ENCODE measurements at regions of chr7 and their contacts with region 1.

Region 1: DNA sequence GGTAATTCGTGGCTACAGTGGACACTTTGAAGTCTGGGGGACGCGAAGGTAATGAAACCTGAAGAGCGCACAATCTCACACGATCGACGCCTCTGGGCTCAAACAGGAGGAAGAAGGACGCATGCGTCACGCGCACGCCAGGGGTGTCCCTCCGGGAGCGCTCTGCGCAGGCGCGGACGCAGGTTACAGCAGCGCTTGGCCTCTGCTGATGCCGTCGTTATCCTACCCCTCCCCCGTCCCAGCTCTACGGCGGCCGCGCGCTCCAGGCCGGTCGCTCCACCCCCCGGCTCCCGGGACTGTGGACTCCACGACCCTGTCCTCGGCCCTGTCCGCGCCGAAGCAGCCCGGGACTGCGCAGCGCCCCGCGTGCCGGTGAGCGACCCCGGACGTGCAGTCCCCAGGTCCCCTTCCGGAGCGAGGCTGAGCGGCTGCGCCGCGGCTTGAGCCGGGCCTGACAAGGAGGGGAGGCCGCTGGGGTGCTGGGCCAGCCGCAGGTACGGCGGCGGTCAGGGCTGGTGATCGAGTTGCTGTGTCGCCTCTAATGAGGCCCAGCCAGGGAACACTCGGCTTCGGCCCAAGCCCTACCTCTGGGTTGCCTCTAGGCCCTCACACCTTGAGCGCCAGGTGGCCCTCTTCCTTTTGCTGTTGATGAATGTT is at the start of gene TMEM106B:
- DNase-seq: peak; percentile 98
- H3K4me3 Mint-ChIP-seq: peak within 1 kb of the TSS; percentile 97
- H3K27ac Mint-ChIP-seq: peak within 1 kb of the TSS; percentile 91
- H3K4me1 Mint-ChIP-seq: peaks cover 28% of the 10 kb centered on the region
- H3K27me3 Mint-ChIP-seq: no peaks in the 10 kb centered on the region
- total RNA-seq, gene TMEM106B: 25.5 to 26.2 TPM

Region 2: DNA sequence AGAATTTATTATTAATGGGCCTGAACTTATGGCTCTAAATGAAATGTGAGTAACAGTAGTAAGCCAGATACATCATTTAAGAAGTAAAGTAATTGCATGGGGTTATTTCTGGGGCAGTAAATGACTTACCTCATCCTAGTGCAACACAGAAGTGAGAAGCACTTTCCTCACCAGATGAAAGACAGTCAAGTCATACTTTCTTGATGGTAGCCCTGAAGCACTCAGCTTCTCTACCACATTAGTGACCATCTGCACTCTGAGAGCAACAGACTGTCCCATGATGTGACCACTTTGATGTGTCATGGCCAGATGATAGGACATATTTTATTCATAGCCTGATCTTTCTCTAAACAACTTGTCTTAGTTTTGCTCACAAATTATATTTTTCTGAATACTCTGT is 1607.1 kb before region 1 on chr7:
- CTCF ChIA-PET with region 1: no interaction called
- POLR2A ChIA-PET with region 1: no interaction called
- intact Hi-C with region 1: no loop called
- DNase-seq: no peak
- H3K4me3 Mint-ChIP-seq: no peak overlapping the region
- H3K27ac Mint-ChIP-seq: no peak overlapping the region
- H3K4me1 Mint-ChIP-seq: no peaks in the 10 kb centered on the region
- H3K27me3 Mint-ChIP-seq: no peaks in the 10 kb centered on the region

Region 3: GRCh38 chr7:12067141-12067831 is 143.9 kb before region 1 on chr7:
- CTCF ChIA-PET with region 1: no interaction called
- POLR2A ChIA-PET with region 1: no interaction called
- intact Hi-C with region 1: loop called (anchors 1 kb)
- DNase-seq: peak; percentile 62
- H3K4me3 Mint-ChIP-seq: no peak overlapping the region
- H3K27ac Mint-ChIP-seq: no peak overlapping the region
- H3K4me1 Mint-ChIP-seq: peaks cover 14% of the 10 kb centered on the region
- H3K27me3 Mint-ChIP-seq: no peaks in the 10 kb centered on the region

Region 4: GRCh38 chr7:12174931-12175330 is 36.3 kb before region 1 on chr7:
- CTCF ChIA-PET with region 1: no interaction called
- POLR2A ChIA-PET with region 1: no interaction called
- intact Hi-C with region 1: loop called (anchors 1 kb)
- DNase-seq: no peak
- H3K4me3 Mint-ChIP-seq: no peak overlapping the region
- H3K27ac Mint-ChIP-seq: no peak overlapping the region
- H3K4me1 Mint-ChIP-seq: peaks cover 20% of the 10 kb centered on the region
- H3K27me3 Mint-ChIP-seq: no peaks in the 10 kb centered on the region

Region 5: GRCh38 chr7:12222889-12223579 is 11.9 kb after region 1 on chr7:
- CTCF ChIA-PET with region 1: no interaction called
- POLR2A ChIA-PET with region 1: interaction called, 6 read pairs
- intact Hi-C with region 1: loop called (anchors 1 kb)
- DNase-seq: no peak
- H3K4me3 Mint-ChIP-seq: no peak overlapping the region
- H3K27ac Mint-ChIP-seq: peak overlapping the region; percentile 78
- H3K4me1 Mint-ChIP-seq: peaks cover 35% of the 10 kb centered on the region
- H3K27me3 Mint-ChIP-seq: no peaks in the 10 kb centered on the region

Region 6: DNA sequence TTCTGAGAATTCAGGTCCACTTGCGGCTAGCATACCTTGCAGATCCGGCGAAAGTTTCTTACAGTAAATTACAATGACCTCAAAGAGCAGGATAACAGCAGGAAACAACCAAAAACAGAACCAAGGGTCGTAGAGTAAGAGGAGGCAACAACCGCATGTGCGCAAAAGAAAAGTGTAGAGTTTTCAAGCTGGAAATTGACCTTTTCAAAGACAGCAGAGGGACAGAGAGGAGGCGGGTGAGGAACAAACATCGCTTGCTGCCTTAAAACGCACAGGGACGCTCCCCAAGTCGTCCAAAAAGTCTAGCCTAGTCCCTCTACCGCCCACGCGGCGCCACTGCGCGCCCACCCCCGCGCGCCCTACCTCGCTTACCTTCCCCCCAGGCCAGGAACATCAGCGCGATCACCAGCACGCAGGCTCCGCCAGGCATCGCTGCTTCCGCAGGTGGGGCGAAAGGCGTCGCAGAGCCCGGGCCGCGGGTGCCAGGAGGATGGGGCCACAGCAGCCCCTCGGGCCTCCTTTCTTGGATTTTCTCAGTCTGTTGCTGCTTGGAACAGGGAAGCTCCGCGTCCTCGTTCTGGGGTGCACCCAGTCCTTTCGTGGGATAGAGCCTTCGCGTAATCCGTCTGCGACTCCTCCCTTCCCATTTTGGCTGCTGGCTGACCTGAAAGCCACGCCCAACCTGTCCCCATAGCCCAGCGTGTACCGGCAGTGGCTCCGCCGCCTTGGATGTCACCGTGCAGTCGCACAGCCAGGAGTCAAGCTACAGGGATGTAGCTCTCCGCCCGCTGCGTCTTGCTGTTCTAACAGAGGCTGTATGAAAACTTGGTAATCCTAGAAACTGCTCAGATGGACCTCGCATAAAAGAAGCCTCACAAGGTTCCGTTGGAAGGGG is 192.4 kb after region 1 on chr7 and contains the start of gene VWDE:
- CTCF ChIA-PET with region 1: no interaction called
- POLR2A ChIA-PET with region 1: no interaction called
- intact Hi-C with region 1: loop called (anchors 1 kb)
- DNase-seq: peak; percentile 82
- H3K4me3 Mint-ChIP-seq: peak within 1 kb of the TSS; percentile 81
- H3K27ac Mint-ChIP-seq: peak within 1 kb of the TSS; percentile 80
- H3K4me1 Mint-ChIP-seq: peaks cover 19% of the 10 kb centered on the region
- H3K27me3 Mint-ChIP-seq: peaks cover 4% of the 10 kb centered on the region
- total RNA-seq, gene VWDE: 2.3 to 3.2 TPM

Measured in activated CD4-positive, alpha-beta memory T cell treated with anti-CD3 and anti-CD28 coated beads for 36 hours (primary cell).